ENCODE measurements at regions of chr2 and their contacts with region 1.

Region 1: GRCh38 chr2:156332534-156333273 is at the start of gene NR4A2:
- DNase-seq: peak; percentile 83 to 85
- ATAC-seq: peak; percentile 57 to 67
- H3K4me3 ChIP-seq: peak within 1 kb of the TSS; percentile 67 to 97 (median 77)
- H3K27ac ChIP-seq: peak within 1 kb of the TSS; percentile 94 to 98 (median 96)
- H3K4me1 ChIP-seq: peaks cover 0 to 4% of the 10 kb centered on the region in 2 donors
- H3K27me3 ChIP-seq: no peaks in the 10 kb centered on the region
- CTCF ChIP-seq: no peak
- POLR2A ChIP-seq: peak; percentile 80 to 97
- total RNA-seq, gene NR4A2: 0.76 to 4.4 (median 1.6) TPM

Region 2: DNA sequence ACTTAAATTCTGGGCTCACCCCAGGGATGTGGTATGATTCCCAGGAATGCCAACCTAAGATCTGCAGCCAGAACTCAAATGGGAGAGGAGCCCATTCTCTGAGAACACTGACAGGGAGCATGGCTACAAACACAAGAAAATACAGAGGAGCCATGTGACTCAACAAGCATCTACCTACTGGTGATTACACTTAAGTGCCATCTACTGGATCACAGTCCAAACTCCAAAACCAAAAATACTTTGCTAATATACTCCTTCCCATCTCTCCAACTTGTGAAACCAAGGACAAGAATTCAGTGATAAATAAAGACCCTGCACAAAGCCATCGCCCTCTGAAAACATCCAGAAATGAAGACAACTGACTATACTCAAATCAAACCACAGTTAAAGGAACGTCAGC is 117.0 kb before region 1 on chr2:
- in situ Hi-C with region 1: no loop called
- intact Hi-C with region 1: no loop called
- DNase-seq: no peak
- ATAC-seq: no peak
- H3K4me3 ChIP-seq: no peak overlapping the region
- H3K27ac ChIP-seq: no peak overlapping the region
- H3K4me1 ChIP-seq: no peaks in the 10 kb centered on the region
- H3K27me3 ChIP-seq: no peaks in the 10 kb centered on the region
- CTCF ChIP-seq: no peak
- POLR2A ChIP-seq: no peak

Region 3: GRCh38 chr2:156400706-156401678 is 68.3 kb after region 1 on chr2:
- in situ Hi-C with region 1: loop called in 1 of 4 experiments (anchors 10 kb)
- intact Hi-C with region 1: loop called (anchors 1 kb)
- DNase-seq: peak; percentile 39 to 44
- ATAC-seq: peak; percentile 71 to 86
- H3K4me3 ChIP-seq: peak overlapping the region; percentile 60 to 73 (median 69)
- H3K27ac ChIP-seq: peak overlapping the region; percentile 88 to 98 (median 92)
- H3K4me1 ChIP-seq: peaks cover 6 to 11% of the 10 kb centered on the region in 2 donors
- H3K27me3 ChIP-seq: no peaks in the 10 kb centered on the region
- CTCF ChIP-seq: no peak
- POLR2A ChIP-seq: no peak

Region 4: GRCh38 chr2:156435715-156436496 is 103.2 kb after region 1 on chr2 and contains the start of gene GPD2:
- in situ Hi-C with region 1: no loop called
- intact Hi-C with region 1: loop called (anchors 1 kb)
- DNase-seq: peak; percentile 88 to 95
- ATAC-seq: peak; percentile 72
- H3K4me3 ChIP-seq: peak within 1 kb of the TSS; percentile 78 to 85 (median 82)
- H3K27ac ChIP-seq: peak within 1 kb of the TSS; percentile 98 to 99 (median 98)
- H3K4me1 ChIP-seq: peaks cover 49 to 51% of the 10 kb centered on the region in 2 donors
- H3K27me3 ChIP-seq: no peaks in the 10 kb centered on the region
- CTCF ChIP-seq: peak in 2 of 5 experiments; percentile 19 to 26
- POLR2A ChIP-seq: peak; percentile 80 to 91
- total RNA-seq, gene GPD2: 39.2 to 69.7 (median 64.1) TPM

Region 5: DNA sequence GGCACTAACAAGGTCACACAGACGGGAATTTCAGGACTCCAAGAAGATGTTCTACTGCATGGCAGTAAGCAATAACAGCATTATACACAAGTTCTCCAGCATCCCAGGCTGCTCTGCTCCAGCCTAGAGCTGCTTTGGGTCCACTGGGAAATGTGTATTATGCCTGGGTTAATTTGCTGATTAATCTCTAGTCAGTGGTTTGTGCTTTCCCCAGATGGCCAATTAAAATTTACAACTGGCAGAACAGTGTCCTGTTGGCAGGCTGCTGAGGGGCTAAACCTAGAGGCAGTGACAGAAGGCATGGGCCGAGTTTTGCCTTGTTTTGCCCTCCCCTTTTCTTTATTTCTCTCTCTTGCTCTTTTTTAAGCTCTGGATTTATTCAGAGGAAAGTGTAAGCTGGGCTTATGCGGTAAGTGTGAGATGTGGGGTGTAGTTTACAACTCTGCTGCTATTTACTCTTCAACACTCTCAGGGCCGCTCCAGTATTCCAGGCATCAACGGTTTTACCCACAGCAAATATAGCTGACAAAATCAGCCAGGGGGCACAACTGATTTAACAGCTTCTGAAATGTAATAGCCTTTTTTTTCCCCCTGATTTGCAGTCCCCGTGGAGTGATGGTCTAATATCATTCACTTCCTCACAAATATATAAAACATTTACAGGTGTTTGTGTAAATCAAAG is 451.5 kb after region 1 on chr2:
- in situ Hi-C with region 1: no loop called
- intact Hi-C with region 1: loop called (anchors 10 kb)
- DNase-seq: no peak
- ATAC-seq: no peak
- H3K4me3 ChIP-seq: no peak overlapping the region
- H3K27ac ChIP-seq: no peak overlapping the region
- H3K4me1 ChIP-seq: peaks cover 3 to 14% of the 10 kb centered on the region in 2 donors
- H3K27me3 ChIP-seq: no peaks in the 10 kb centered on the region
- CTCF ChIP-seq: no peak
- POLR2A ChIP-seq: no peak